ENCODE measurements at regions of chr12 and their contacts with region 1.

Region 1: GRCh38 chr12:49707812-49708147 is 575 bp upstream of the FMNL3 start:
- DNase-seq: no peak
- ATAC-seq: no peak
- H3K4me3 ChIP-seq: no peak overlapping the region
- H3K27ac ChIP-seq: no peak overlapping the region
- H3K4me1 ChIP-seq: peaks cover 21 to 42% of the 10 kb centered on the region in 2 donors
- H3K27me3 ChIP-seq: no peaks in the 10 kb centered on the region
- CTCF ChIP-seq: no peak

Region 2: DNA sequence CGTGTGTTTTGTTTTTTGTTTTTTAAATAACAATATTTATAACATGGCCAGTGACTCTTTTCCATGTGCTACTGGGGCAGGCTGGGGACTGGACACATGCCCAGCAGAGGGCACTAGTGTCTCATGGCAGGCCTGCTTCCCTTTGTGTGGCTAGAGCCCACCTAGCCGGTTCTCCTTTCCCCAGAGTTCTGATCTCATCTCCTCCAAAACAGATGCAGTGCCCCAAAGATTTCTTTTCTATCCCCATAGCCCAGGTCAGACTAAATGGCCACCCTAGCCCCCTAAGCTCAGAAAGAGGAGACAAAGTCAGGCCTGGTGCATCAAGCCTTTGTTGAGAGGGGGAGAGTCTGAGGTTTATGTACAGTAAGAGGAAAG is 63.2 kb before region 1 on chr12:
- intact Hi-C with region 1: loop called in 1 of 2 experiments (anchors 2 kb)
- DNase-seq: peak; percentile 72 to 88 (median 84)
- ATAC-seq: peak; percentile 84
- H3K4me3 ChIP-seq: no peak overlapping the region
- H3K27ac ChIP-seq: peak overlapping the region in 1 of 2 donors; percentile 24
- H3K4me1 ChIP-seq: peaks cover 11 to 49% of the 10 kb centered on the region in 2 donors
- H3K27me3 ChIP-seq: no peaks in the 10 kb centered on the region
- CTCF ChIP-seq: peak; percentile 92 to 95

Region 3: GRCh38 chr12:49767333-49767732 is 59.6 kb after region 1 on chr12:
- intact Hi-C with region 1: no loop called
- DNase-seq: no peak
- ATAC-seq: no peak
- H3K4me3 ChIP-seq: no peak overlapping the region
- H3K27ac ChIP-seq: no peak overlapping the region
- H3K4me1 ChIP-seq: peaks cover 0 to 13% of the 10 kb centered on the region in 2 donors
- H3K27me3 ChIP-seq: no peaks in the 10 kb centered on the region
- CTCF ChIP-seq: no peak

Measured in left lung (tissue), 14 donors.